Mammary epithelial cell (primary cell): ENCODE measurements at regions of chr10 and their contacts with region 1.

Region 1: GRCh38 chr10:5434017-5434753 is 21.8 kb downstream of the NET1 start:
- DNase-seq: peak; percentile 72
- H3K4me3 ChIP-seq: no peak overlapping the region
- H3K27ac ChIP-seq: peak overlapping the region; percentile 87
- H3K4me1 ChIP-seq: peaks cover 14% of the 10 kb centered on the region
- H3K27me3 ChIP-seq: no peaks in the 10 kb centered on the region
- CTCF ChIP-seq: peak; percentile 53 to 76

Region 2: DNA sequence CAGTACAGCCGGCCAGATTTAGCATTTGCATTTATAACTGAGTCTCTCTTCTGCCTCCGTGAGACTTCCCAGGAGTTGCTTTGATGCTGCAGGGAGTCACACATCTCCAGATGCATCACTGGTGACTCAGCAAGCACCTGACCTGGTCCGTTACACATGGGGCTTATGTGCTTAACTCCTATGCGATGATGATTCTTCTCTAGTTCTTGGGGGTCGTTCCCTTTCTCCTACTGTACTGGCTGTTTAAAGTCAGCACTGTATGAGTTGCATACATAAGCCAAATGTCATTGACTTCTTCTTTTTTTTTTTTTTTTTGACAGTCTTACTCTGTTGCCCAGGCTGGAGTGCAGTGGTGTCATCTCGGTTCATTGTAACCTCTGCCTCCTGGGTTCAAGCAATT is 621.2 kb before region 1 on chr10:
- CTCF ChIA-PET with region 1: no interaction called
- dilution Hi-C with region 1: no loop called
- in situ Hi-C with region 1: no loop called
- intact Hi-C with region 1: loop called (anchors 1 kb)
- DNase-seq: peak; percentile 89
- H3K4me3 ChIP-seq: no peak overlapping the region
- H3K27ac ChIP-seq: peak overlapping the region; percentile 38
- H3K4me1 ChIP-seq: peaks cover 27% of the 10 kb centered on the region
- H3K27me3 ChIP-seq: no peaks in the 10 kb centered on the region
- CTCF ChIP-seq: no peak

Region 3: DNA sequence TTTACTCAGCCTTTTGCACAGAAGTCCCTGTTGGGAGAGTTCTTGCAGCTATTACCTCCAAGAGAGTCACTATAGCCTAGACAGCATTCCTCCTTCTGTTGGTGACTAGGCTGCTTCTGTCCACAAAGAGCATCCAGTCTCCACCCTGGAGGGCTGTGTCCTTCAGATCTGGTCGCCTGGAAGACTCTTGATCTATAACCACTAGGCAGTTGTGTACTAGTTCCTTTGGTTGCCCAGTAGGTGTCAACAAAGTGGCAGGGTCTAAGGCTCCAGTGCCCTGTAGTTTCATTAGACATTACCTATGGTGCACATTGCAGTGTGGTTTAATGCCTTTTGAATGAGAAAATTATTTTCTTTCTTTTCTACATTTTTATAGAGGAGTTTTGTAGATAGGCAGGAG is 419.2 kb before region 1 on chr10:
- CTCF ChIA-PET with region 1: no interaction called
- dilution Hi-C with region 1: no loop called
- in situ Hi-C with region 1: no loop called
- intact Hi-C with region 1: loop called (anchors 5 kb)
- DNase-seq: no peak
- H3K4me3 ChIP-seq: no peak overlapping the region
- H3K27ac ChIP-seq: no peak overlapping the region
- H3K4me1 ChIP-seq: peaks cover 12% of the 10 kb centered on the region
- H3K27me3 ChIP-seq: no peaks in the 10 kb centered on the region
- CTCF ChIP-seq: peak; percentile 16 to 43

Region 4: DNA sequence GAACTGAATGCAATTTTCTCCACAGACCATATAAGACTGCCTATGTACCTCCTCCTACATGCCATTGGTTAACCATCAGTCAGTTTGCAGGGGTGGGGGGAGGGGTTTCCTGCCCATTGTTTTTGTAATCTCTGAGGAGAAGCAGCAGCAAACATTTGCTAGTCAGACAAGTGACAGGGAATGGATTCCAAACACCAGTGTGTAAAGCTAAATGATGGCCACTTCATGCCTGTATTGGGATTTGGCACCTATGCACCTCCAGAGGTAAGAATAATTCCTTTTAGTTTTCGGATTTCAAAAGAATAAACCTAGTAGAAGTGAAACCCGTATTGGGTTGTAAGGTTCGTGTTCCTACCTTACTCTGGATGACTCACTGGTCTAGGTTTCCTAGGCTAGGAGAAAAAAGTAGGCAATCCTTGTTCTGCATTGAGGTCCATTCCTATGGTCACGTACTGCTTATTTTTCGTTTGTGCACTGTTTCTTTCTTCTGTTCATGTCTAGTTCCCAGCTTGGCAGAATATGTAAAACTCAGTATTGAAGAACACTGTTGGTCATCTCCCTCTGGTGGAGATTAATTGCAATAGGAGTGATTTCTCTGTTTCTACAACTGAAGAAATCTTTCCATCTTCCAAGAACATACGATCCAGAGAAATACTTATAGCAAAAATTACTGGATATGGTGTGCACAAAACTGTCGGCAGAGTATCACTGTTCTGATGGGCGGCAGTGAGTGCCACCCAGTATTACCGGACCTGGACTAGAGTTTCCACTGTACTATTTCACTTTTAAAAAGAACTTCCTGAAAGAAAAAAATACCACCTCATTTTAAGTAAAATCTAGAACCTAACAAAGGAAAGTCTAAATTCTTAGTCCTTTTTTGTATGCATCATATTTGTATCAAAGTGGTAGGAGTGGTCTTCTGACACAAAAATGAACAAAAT is 339.6 kb before region 1 on chr10 and contains the start of gene AKR1C3:
- CTCF ChIA-PET with region 1: no interaction called
- dilution Hi-C with region 1: no loop called
- in situ Hi-C with region 1: no loop called
- intact Hi-C with region 1: loop called (anchors 2 kb)
- DNase-seq: peak; percentile 80
- H3K4me3 ChIP-seq: peak within 1 kb of the TSS; percentile 57 to 67 (median 60)
- H3K27ac ChIP-seq: peak within 1 kb of the TSS; percentile 80
- H3K4me1 ChIP-seq: peaks cover 18% of the 10 kb centered on the region
- H3K27me3 ChIP-seq: no peaks in the 10 kb centered on the region
- CTCF ChIP-seq: peak; percentile 66 to 75
- total RNA-seq, gene AKR1C3: 18.8 to 50.7 TPM

Region 5: DNA sequence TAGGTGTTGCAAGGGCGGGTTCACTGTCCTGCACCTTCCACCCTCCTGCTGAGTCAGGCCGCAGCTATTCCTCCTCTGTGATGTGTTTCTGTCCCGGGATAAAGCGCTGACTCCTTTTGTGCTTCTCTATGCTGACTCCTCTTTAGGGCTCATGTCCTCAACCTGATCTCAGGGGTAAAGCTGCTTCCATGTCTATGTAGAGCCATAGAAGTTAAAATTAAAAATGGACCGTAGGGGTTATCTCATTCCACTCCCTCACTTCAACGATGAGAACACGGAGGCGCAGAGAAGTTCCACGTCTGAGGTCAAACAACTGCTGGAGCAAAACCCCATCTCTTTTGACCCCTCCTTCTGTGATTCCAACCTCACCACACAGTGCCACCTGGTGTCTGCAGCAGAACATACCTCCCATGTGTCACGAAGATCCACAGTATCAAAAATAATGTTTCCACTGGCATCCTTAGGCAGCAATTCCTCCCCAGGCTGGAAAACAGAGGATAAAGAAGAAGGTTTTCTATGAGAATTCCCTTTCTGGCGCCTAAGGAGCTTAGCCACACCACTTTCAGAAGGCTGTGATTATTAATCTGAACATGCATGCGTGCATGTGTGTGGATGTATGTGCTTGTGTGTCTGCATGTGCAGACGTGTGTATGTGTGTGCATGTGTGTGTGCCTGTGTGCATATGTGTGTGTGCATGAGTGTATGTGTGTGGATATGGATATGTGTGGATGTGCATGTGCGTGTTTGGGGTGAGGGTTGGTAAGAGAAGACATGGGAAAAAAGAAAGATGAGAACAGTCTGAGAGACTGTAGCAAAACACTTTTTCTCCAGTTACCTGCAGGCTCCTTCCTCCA is 150.7 kb before region 1 on chr10:
- CTCF ChIA-PET with region 1: no interaction called
- dilution Hi-C with region 1: no loop called
- in situ Hi-C with region 1: no loop called
- intact Hi-C with region 1: loop called (anchors 1 kb)
- DNase-seq: peak; percentile 64
- H3K4me3 ChIP-seq: no peak overlapping the region
- H3K27ac ChIP-seq: no peak overlapping the region
- H3K4me1 ChIP-seq: peaks cover 9% of the 10 kb centered on the region
- H3K27me3 ChIP-seq: no peaks in the 10 kb centered on the region
- CTCF ChIP-seq: peak; percentile 71 to 85

Region 6: DNA sequence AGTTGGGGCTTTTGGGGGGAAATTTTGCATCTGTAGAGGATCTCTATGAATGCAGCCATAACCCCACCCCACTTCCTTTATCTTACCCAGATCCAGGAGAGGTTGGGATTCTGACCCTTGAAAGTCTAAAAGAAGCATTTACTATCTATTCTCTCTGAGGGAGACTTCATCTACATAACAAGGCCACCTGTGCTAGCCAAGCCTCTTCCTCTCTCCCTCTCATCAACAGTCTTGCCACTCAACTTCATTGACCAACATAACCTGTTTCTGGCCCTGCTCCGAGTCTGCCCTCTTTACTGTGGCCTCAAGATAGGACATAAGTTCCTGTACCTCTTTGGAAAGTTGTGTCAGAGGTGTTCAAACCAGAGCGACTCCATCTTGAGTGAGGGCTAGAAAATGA is 49.0 kb before region 1 on chr10:
- CTCF ChIA-PET with region 1: no interaction called
- dilution Hi-C with region 1: no loop called
- in situ Hi-C with region 1: no loop called
- intact Hi-C with region 1: loop called (anchors 1 kb)
- DNase-seq: no peak
- H3K4me3 ChIP-seq: no peak overlapping the region
- H3K27ac ChIP-seq: no peak overlapping the region
- H3K4me1 ChIP-seq: no peaks in the 10 kb centered on the region
- H3K27me3 ChIP-seq: no peaks in the 10 kb centered on the region
- CTCF ChIP-seq: no peak

Region 7: DNA sequence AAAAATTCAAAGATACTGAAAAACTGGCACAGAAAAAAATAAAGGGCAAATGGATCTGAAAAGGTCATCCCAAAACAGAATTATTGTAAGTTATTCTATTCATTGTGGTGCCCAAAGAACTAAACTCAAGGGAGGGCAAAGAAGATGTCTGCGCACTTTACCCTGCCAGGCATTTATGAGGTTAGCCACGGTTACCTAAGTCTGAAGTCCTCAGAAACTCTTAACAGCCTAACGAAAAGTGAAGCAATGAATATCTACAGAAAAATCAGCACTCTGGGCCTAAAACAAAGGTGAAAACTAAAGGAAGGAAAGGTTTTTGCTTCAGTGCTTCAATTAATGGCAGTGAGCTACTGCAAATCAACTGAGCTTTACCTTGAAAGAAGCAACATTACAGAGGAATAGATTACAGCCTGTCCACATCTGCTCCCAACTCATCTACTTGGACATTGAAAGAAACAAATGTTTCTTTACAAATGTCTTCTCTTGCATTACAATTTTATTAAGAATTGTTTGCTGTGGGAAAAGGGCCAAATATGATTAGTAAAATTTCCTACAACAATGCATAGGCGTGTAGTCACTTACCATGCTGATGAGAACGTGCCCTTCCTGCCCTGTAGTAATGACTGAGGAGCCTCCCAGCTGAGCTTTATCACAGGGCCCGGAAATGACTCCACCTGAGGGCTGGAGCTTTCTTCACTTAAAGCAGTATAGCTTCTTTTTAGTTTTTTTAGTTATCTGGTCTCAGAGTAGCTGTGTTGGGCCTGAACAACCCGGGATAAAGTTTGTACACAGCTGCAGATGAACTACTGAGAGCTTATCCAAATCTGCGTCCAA is 29.8 kb before region 1 on chr10 and contains the start of gene TUBAL3:
- CTCF ChIA-PET with region 1: no interaction called
- dilution Hi-C with region 1: no loop called
- in situ Hi-C with region 1: no loop called
- intact Hi-C with region 1: no loop called
- DNase-seq: peak; percentile 56
- H3K4me3 ChIP-seq: peak within 1 kb of the TSS in 2 of 3 experiments; percentile 27 to 46
- H3K27ac ChIP-seq: no peak within 1 kb of the TSS
- H3K4me1 ChIP-seq: peaks cover 5% of the 10 kb centered on the region
- H3K27me3 ChIP-seq: no peaks in the 10 kb centered on the region
- CTCF ChIP-seq: no peak
- total RNA-seq, gene TUBAL3: 0.17 to 0.73 TPM